Stomach (tissue), 19 donors: ENCODE measurements at regions of chr1 and their contacts with region 1.

Region 1: GRCh38 chr1:145922266-145922665 is 3.7 kb upstream of the PEX11B start:
- DNase-seq: no peak
- H3K4me3 ChIP-seq: no peak overlapping the region
- H3K27ac ChIP-seq: peak overlapping the region in 1 of 5 donors; percentile 2
- H3K4me1 ChIP-seq: peaks cover 25 to 55% (median 37%) of the 10 kb centered on the region in 4 donors
- H3K27me3 ChIP-seq: no peaks in the 10 kb centered on the region
- CTCF ChIP-seq: no peak
- EP300 ChIP-seq: no peak
- POLR2A ChIP-seq: no peak

Region 2: GRCh38 chr1:145964902-145965744 is 42.9 kb after region 1 on chr1:
- intact Hi-C with region 1: loop called (anchors 5 kb)
- DNase-seq: no peak
- H3K4me3 ChIP-seq: peak overlapping the region; percentile 52 to 67 (median 60)
- H3K27ac ChIP-seq: peak overlapping the region; percentile 83 to 99 (median 91)
- H3K4me1 ChIP-seq: peaks cover 14 to 54% (median 48%) of the 10 kb centered on the region in 4 donors
- H3K27me3 ChIP-seq: peaks cover 0 to 14% (median 8%) of the 10 kb centered on the region in 3 donors
- CTCF ChIP-seq: no peak
- EP300 ChIP-seq: no peak
- POLR2A ChIP-seq: no peak